Prostate gland (tissue), 2 donors: ENCODE measurements at regions of chr10 and their contacts with region 1.

Region 1: DNA sequence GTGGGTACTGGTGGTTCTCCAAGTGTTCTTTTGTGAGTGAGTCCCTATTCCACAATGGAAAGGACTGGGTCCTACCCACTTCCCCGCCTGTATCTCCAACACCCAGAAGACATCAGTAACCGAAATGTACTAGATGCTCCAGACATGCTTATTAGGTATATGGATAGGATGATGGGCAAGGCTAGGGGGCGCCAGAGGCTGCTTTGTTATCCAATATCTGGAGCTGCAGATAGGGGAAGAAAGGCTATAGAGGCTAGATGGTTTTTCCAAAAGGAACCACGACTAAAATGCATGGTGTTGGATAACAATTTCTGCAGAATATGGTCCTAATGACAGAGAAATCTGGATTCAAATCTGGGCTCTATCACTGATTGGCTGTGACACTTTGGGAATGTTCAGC is 56.2 kb upstream of the TM9SF3 start:
- DNase-seq: peak; percentile 35
- H3K4me3 ChIP-seq: no peak overlapping the region
- H3K27ac ChIP-seq: no peak overlapping the region
- H3K4me1 ChIP-seq: no peaks in the 10 kb centered on the region
- H3K27me3 ChIP-seq: no peaks in the 10 kb centered on the region
- CTCF ChIP-seq: peak in 3 of 4 experiments; percentile 25 to 48 (median 46)
- POLR2A ChIP-seq: no peak

Region 2: GRCh38 chr10:96208271-96208670 is 434.7 kb before region 1 on chr10:
- intact Hi-C with region 1: no loop called
- DNase-seq: no peak
- H3K4me3 ChIP-seq: no peak overlapping the region
- H3K27ac ChIP-seq: no peak overlapping the region
- H3K4me1 ChIP-seq: no peaks in the 10 kb centered on the region
- H3K27me3 ChIP-seq: no peaks in the 10 kb centered on the region
- CTCF ChIP-seq: no peak
- POLR2A ChIP-seq: no peak

Region 3: GRCh38 chr10:96719850-96720421 is 77.0 kb after region 1 on chr10:
- intact Hi-C with region 1: loop called (anchors 10 kb)
- DNase-seq: no peak
- H3K4me3 ChIP-seq: peak overlapping the region; percentile 41 to 56
- H3K27ac ChIP-seq: peak overlapping the region; percentile 28 to 43
- H3K4me1 ChIP-seq: no peaks in the 10 kb centered on the region
- H3K27me3 ChIP-seq: no peaks in the 10 kb centered on the region
- CTCF ChIP-seq: peak in 1 of 4 experiments; percentile 20
- POLR2A ChIP-seq: no peak

Region 4: GRCh38 chr10:96826438-96826837 is 183.5 kb after region 1 on chr10:
- intact Hi-C with region 1: loop called (anchors 5 kb)
- DNase-seq: no peak
- H3K4me3 ChIP-seq: no peak overlapping the region
- H3K27ac ChIP-seq: no peak overlapping the region
- H3K4me1 ChIP-seq: no peaks in the 10 kb centered on the region
- H3K27me3 ChIP-seq: no peaks in the 10 kb centered on the region
- CTCF ChIP-seq: no peak
- POLR2A ChIP-seq: no peak